ENCODE measurements at regions of chr5 and their contacts with region 1.

Region 1: DNA sequence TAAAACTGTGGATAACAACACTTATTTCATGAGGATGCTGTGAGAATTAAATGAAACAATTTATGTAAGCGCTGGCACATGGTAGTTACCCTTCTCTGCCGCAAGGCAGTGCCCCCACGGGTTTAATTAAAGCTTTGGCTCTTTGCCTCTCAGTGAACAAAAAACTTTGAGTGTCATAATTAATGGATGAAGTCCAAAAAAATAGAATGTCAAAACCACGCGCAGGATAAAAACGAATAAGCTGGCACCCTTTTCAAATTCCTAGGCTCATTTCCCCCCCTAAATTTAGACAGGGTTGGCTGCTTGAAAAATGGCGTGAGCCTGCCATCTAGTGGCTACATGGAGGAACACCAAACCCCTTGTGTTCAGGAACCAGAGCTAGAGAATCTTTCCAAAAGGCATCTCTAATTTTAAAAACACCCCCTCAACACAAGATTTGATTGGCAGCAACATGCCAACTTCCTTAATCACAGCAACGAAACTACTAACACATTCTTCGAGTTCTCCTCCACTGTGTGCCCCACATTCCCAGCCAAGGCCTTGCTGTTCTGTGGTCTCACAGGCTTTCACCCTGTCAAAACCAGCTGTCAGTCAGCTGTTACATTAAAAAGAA is 29.0 kb upstream of the CCNG1 start:
- DNase-seq: peak; percentile 31
- H3K4me3 ChIP-seq: no peak overlapping the region
- H3K27ac ChIP-seq: no peak overlapping the region
- H3K4me1 ChIP-seq: no peaks in the 10 kb centered on the region
- H3K27me3 ChIP-seq: peaks cover 1% of the 10 kb centered on the region
- CTCF ChIP-seq: peak; percentile 66 to 76 (median 68)
- POLR2A ChIP-seq: no peak

Region 2: GRCh38 chr5:161544350-161544765 is 1864.1 kb before region 1 on chr5:
- intact Hi-C with region 1: loop called (anchors 10 kb)
- DNase-seq: no peak
- H3K4me3 ChIP-seq: no peak overlapping the region
- H3K27ac ChIP-seq: no peak overlapping the region
- H3K4me1 ChIP-seq: no peaks in the 10 kb centered on the region
- H3K27me3 ChIP-seq: peaks cover 21% of the 10 kb centered on the region
- CTCF ChIP-seq: peak in 3 of 4 experiments; percentile 15 to 43 (median 41)
- POLR2A ChIP-seq: no peak

Region 3: DNA sequence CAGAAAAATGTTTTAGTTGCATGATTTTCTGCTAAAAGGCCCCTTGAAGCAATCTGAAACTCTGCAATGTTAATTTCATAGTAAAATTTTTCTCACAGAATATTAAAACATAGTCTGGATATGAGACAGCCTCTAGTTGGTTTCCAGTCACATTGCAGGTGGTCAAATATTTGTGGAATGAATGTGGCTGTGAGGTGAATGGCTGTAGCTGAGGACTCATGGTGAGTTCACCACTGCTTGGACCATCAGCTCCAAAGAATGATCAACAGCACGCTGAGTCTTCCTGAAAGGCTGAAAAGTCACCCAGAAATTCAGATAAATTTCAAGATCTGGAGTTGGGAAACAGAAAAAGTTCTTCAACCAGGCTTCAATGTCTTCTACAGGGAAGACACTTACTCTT is 176.8 kb after region 1 on chr5:
- intact Hi-C with region 1: no loop called
- DNase-seq: no peak
- H3K4me3 ChIP-seq: no peak overlapping the region
- H3K27ac ChIP-seq: no peak overlapping the region
- H3K4me1 ChIP-seq: no peaks in the 10 kb centered on the region
- H3K27me3 ChIP-seq: no peaks in the 10 kb centered on the region
- CTCF ChIP-seq: no peak
- POLR2A ChIP-seq: no peak